PC-3 (cell line): ENCODE measurements at regions of chr14 and their contacts with region 1.

Region 1: GRCh38 chr14:50985124-50985858 is 41.0 kb upstream of the PYGL start:
- DNase-seq: no peak
- ATAC-seq: no peak; the same call in none of the 2 replicates
- H3K4me3 ChIP-seq: no peak overlapping the region
- H3K27ac ChIP-seq: no peak overlapping the region
- H3K4me1 ChIP-seq: no peaks in the 10 kb centered on the region
- H3K27me3 ChIP-seq: 0 out of 2 replicates have a peak, but pooled peaks cover 3% of the 10 kb centered on the region
- CTCF ChIP-seq: no peak

Region 2: DNA sequence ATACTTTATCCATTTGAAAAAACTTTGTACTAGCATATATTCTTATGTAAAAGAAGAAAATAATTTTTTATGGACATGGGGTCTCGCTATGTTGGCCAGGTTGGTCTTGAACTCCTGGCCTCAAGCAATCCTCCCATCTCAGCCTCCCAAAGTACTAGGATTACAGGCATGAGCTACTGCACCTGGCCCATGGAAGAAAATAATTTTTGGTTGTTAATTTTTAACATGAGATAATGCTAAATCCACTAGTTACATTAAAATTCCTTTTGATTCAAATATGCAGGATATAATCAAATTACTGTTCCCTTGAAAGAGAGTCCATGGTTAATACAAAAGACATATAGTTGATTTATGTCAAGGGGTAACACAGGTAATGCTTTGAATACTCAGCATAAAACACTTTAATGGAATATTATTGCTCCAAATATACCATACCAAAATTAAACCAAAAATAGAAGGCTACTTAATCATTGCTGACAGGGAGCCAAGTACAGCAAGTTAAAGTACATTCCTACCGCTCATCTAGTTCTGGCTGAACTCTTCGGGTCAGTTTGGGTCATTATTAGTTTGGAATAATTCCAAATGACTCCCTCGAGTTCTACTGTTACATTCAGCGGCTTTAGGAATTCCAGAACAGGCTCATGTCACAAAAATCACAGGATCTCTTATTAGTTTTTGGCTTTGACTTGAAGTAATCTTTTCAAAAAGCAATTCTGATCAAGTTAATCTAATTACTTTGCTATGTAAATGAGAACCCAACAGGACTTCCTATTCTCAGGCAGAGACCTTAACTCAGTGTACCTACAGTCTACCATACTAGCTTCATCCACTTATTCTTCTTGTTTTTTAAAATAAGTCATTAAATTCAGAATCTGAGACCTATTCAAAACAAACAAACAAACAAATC is 760.0 kb before region 1 on chr14:
- CTCF ChIA-PET with region 1: no interaction called
- POLR2A ChIA-PET with region 1: no interaction called
- intact Hi-C with region 1: no loop called
- DNase-seq: peak; percentile 87
- ATAC-seq: peak; percentile 83
- H3K4me3 ChIP-seq: no peak overlapping the region
- H3K27ac ChIP-seq: no peak overlapping the region
- H3K4me1 ChIP-seq: peaks cover 21% of the 10 kb centered on the region
- H3K27me3 ChIP-seq: no peaks in the 10 kb centered on the region
- CTCF ChIP-seq: no peak

Region 3: DNA sequence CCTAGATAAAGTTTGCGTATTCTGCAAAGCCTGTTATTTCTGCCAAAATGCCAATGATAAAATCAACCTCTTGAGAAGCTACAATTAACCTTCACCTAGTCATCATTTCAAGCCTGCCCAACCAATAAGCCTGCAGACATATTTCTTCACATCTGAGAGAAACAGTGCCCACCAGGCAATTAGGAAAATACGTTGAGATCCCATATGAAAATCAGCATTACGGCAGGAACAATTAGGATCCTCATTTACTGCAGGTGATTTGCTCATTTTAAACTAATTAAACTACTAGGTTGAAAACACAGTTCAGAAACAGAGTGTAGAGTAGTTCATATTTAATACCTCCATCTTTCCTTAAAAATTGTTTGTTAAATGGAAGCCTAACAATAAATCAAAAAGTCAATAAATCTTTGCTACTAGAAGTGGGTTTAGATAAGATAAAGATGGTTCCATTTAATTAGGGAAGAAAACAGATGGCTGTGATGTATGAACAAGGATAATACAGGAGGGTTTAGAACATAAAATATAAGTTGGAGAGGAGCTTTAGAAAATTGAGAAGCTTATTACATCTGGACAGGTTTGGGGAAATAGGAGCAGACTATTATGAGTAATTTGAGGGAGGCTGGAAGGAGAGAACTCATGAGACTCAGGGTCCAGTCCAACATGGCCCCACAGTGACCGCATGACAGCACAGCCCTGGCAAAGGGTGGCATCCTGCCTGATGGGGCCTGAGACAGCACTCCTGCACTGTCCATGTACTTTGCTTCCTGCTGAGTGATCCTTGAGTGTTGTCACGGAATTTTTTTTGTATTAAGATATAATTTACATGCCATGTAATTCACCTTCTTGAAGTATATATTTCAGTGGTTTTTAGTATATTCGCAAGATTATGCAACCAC is 14.2 kb before region 1 on chr14:
- CTCF ChIA-PET with region 1: no interaction called
- POLR2A ChIA-PET with region 1: interaction called, 3 read pairs
- intact Hi-C with region 1: loop called (anchors 2 kb)
- DNase-seq: no peak
- ATAC-seq: no peak
- H3K4me3 ChIP-seq: no peak overlapping the region
- H3K27ac ChIP-seq: no peak overlapping the region
- H3K4me1 ChIP-seq: no peaks in the 10 kb centered on the region
- H3K27me3 ChIP-seq: no peaks in the 10 kb centered on the region
- CTCF ChIP-seq: no peak